GM13976 (cell line): ENCODE measurements at regions of chr22 and their contacts with region 1.

Region 1: GRCh38 chr22:39319270-39320022 is at the start of gene RPL3:
- DNase-seq: peak; percentile 98
- CTCF ChIP-seq: no peak

Region 2: DNA sequence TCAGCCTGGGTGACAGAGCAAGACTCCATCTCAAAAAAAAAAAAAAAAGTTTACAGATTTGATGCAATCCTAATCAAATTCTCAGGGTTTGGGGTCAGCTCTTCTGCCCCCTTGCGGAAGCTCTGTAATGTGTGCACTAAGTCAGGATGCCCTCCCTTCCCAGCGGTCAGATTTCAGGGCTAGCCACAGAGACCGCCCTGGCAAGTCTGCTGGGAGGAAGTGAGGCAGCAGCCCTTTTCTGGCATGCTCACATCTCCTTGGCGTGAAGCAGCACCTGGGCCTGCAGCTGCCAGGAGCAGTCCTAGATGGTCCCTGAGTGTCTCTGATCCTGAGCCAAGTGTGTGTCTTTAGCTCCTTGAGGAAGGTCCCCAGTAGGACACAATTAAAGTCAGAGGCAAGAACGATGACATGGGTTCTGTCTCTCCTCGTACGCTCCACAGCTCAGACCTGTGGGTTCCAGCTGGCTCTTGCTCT is 316.2 kb before region 1 on chr22:
- in situ Hi-C with region 1: loop called (anchors 25 kb)
- DNase-seq: peak; percentile 87
- CTCF ChIP-seq: peak; percentile 60

Region 3: DNA sequence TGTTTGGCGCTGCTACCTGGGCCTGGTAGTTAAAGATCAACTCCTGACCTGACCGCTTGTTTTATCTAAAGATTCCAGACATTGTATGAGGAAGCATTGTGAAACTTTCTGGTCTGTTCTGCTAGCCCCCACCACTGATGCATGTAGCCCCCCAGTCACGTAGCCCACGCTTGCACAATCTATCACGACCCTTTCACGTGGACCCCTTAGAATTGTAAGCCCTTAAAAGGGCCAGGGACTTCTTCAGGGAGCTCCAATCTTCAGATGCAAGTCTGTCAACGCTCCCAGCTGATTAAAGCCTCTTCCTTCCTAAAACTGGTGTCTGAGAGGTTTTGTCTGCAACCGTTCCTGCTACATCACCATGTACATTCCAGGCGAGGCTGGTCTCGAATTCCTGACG is 263.8 kb before region 1 on chr22:
- in situ Hi-C with region 1: no loop called
- DNase-seq: no peak
- CTCF ChIP-seq: no peak

Region 4: DNA sequence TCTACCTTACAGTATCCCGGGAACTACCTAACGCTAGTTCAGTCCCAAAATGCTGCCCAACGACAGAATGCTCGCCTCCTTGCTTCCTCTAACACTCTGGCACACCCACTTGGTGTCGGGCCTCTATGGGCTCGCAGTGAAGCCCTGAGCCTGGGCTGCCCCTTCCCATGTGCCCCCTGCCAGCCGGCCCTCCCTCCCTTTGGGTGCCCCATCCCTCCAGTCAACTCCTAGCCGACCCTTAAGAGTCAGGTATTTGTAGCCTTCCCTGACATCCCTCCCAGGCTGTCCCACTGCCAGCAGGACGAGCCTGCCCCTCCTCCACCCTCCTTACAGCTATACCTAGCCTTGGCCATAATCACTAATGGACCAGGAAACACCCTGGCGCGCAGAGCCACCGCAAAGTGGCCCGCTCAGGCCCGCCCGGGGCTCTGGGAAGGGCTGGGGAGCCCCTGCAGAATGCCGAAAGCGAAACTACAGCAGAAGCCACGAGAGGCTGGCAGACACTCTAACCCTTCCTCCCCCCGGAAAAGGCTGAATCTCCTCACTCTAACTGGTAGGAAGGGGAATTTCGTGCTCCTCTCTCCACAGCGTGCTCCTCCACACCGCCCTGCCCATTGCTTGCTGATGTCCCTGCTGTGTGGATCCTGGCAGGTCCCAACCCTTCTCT is 175.2 kb before region 1 on chr22:
- in situ Hi-C with region 1: no loop called
- DNase-seq: peak; percentile 80
- CTCF ChIP-seq: no peak

Region 5: DNA sequence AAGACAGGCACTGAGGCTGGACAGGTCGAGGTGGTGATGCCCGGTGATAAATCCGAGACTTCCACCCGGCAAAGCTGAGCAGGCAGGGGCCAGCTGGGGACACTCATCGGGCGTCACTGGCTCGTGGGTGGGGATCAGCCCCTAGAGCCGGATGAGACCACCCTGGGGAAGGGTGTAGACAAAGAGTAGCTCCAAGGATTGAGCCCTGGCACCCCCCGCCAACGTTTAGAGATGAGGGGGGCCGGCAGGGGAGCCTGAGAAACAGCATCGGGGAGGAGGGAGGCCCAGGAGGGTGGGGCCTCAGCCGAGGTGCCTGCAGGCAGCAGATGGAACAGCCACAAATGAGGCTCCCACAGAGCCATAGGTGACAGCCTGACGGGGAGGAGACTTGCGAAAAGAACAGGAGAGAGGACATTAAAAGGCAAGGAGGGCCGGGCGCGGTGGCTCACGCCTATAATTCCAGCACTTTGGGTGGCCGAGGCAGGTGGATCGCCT is 139.6 kb before region 1 on chr22:
- in situ Hi-C with region 1: no loop called
- DNase-seq: no peak
- CTCF ChIP-seq: no peak